ENCODE measurements at regions of chr13 and their contacts with region 1.

Region 1: DNA sequence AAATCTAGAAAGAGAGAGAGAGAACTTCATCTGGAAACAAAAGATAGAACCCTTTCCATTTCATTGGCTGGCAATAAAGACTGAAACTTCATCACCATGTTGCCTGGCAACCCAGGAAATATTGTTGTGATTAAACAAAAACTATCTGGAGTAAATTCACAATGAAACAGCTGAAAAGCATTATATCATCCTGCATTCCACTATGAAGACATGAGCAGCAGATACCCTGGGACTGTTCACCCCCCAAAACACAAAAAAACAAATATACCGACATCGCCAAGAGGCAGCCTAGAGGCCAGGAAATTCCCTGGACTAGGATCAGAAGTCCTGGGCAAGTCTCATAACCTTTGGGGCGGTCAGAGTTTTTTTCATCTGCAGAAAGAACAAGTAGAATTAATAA is 158.3 kb downstream of the FOXO1 start:
- DNase-seq: peak in 6 of 9 donors; percentile 36 to 63 (median 50)
- ATAC-seq: peak; percentile 73
- H3K4me3 ChIP-seq: no peak overlapping the region
- H3K4me3 Mint-ChIP-seq: peak overlapping the region in 9 of 10 donors; percentile 37 to 84 (median 65)
- H3K27ac ChIP-seq: peak overlapping the region; percentile 51
- H3K27ac Mint-ChIP-seq: peak overlapping the region; percentile 62 to 95 (median 85)
- H3K4me1 ChIP-seq: peaks cover 0 to 43% of the 10 kb centered on the region in 2 donors
- H3K4me1 Mint-ChIP-seq: peaks cover 27 to 79% (median 71%) of the 10 kb centered on the region in 7 donors
- H3K27me3 ChIP-seq: no peaks in the 10 kb centered on the region
- H3K27me3 Mint-ChIP-seq: no peaks in the 10 kb centered on the region

Region 2: DNA sequence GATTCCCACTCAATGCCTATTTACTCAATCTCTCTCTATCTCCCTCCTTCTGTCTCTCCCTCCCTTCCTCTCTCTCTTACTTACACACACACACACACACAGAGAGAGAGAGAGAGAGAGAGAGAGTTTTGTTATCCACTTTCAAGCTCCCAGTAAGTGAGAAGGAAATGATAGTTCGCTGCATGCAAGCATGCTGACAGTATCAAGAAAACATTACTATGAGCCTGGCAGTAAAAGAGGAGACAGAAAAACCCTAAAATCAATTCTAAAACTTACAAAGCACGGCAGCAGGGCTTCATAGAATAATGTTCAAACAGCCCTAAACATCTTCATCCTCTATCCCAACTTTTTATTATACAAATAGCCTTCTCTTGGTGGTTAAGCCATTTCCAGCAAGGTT is 13.6 kb before region 1 on chr13:
- CTCF ChIA-PET with region 1: no interaction called
- POLR2A ChIA-PET with region 1: interaction called, 8 read pairs
- intact Hi-C with region 1: loop called in 1 of 2 experiments (anchors 1 kb)
- DNase-seq: peak in 7 of 9 donors; percentile 18 to 64 (median 59)
- ATAC-seq: peak; percentile 66
- H3K4me3 ChIP-seq: peak overlapping the region; percentile 49
- H3K4me3 Mint-ChIP-seq: peak overlapping the region; percentile 76 to 97 (median 85)
- H3K27ac ChIP-seq: peak overlapping the region; percentile 70
- H3K27ac Mint-ChIP-seq: peak overlapping the region; percentile 88 to 98 (median 96)
- H3K4me1 ChIP-seq: peaks cover 38 to 66% of the 10 kb centered on the region in 2 donors
- H3K4me1 Mint-ChIP-seq: peaks cover 54 to 92% (median 85%) of the 10 kb centered on the region in 7 donors
- H3K27me3 ChIP-seq: no peaks in the 10 kb centered on the region
- H3K27me3 Mint-ChIP-seq: no peaks in the 10 kb centered on the region

Region 3: DNA sequence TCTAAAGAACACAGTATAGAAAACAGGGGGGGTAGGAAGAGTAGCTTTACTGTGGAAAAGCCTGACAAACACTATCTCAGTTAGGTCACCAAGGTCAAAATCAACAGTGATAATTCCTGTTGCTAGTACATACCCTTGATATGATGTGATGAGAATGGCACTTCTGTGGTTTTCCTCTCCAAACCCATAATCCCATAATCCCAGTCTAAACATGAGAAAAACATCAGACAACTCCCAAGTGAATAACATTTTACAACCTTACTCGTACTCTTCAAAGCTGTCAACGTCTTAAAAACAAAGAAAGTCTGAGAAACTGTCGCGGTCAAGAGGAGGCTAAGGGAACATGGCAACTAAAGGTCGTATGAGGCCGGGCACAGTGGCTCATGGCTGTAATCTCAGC is 20.8 kb after region 1 on chr13:
- CTCF ChIA-PET with region 1: interaction called, 6 read pairs
- POLR2A ChIA-PET with region 1: no interaction called
- intact Hi-C with region 1: loop called in 1 of 2 experiments (anchors 2 kb)
- DNase-seq: no peak
- ATAC-seq: no peak
- H3K4me3 ChIP-seq: no peak overlapping the region
- H3K4me3 Mint-ChIP-seq: no peak overlapping the region
- H3K27ac ChIP-seq: no peak overlapping the region
- H3K27ac Mint-ChIP-seq: no peak overlapping the region
- H3K4me1 ChIP-seq: no peaks in the 10 kb centered on the region
- H3K4me1 Mint-ChIP-seq: peaks cover 5 to 34% (median 30%) of the 10 kb centered on the region in 7 donors
- H3K27me3 ChIP-seq: no peaks in the 10 kb centered on the region
- H3K27me3 Mint-ChIP-seq: no peaks in the 10 kb centered on the region

Region 4: DNA sequence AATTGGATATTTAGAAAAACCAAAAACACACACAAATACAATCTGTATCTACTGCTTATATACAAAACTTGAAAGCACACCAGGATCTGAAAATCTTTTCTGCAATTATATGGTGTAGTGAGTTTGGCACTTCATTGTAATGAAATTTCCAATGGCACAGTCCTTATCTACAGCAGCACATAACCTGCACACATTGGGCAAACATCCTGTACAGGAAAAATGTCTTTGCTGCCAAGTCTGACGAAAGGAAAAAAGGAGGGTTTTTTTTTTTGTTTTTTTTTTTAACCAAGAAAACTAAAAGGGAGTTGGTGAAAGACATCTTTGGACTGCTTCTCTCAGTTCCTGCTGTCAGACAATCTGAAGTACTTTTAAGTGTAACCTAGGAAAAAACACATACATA is 50.5 kb after region 1 on chr13:
- CTCF ChIA-PET with region 1: no interaction called
- POLR2A ChIA-PET with region 1: no interaction called
- intact Hi-C with region 1: no loop called
- DNase-seq: no peak
- ATAC-seq: no peak
- H3K4me3 ChIP-seq: no peak overlapping the region
- H3K4me3 Mint-ChIP-seq: peak overlapping the region in 8 of 10 donors; percentile 34 to 81 (median 66)
- H3K27ac ChIP-seq: peak overlapping the region; percentile 32
- H3K27ac Mint-ChIP-seq: peak overlapping the region in 8 of 9 donors; percentile 68 to 92 (median 82)
- H3K4me1 ChIP-seq: peaks cover 7 to 47% of the 10 kb centered on the region in 2 donors
- H3K4me1 Mint-ChIP-seq: peaks cover 42 to 99% (median 93%) of the 10 kb centered on the region in 7 donors
- H3K27me3 ChIP-seq: no peaks in the 10 kb centered on the region
- H3K27me3 Mint-ChIP-seq: no peaks in the 10 kb centered on the region

Region 5: DNA sequence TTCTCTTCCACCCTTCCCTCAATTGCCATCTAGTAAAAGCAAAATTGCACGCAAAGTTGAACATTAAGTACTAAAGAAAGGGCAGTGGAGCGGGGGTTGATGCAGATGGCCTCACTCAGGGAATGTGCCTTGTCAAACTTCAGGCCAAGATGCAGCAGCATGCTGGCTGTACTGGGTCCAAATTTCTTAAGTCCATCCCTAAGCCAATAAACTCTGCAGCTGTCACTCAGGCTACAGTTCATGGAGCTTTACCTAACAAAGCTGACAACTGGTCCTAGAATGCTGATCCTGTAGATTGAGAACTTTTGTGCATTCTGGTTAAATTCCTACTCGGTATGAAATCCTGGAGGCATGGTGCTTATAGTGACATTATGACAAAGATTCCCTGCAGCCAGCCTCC is 69.9 kb after region 1 on chr13:
- CTCF ChIA-PET with region 1: no interaction called
- POLR2A ChIA-PET with region 1: no interaction called
- intact Hi-C with region 1: loop called in 1 of 2 experiments (anchors 5 kb)
- DNase-seq: no peak
- ATAC-seq: no peak
- H3K4me3 ChIP-seq: no peak overlapping the region
- H3K4me3 Mint-ChIP-seq: peak overlapping the region in 8 of 10 donors; percentile 35 to 73 (median 64)
- H3K27ac ChIP-seq: peak overlapping the region; percentile 5
- H3K27ac Mint-ChIP-seq: peak overlapping the region in 8 of 9 donors; percentile 20 to 86 (median 71)
- H3K4me1 ChIP-seq: peaks cover 46 to 84% of the 10 kb centered on the region in 2 donors
- H3K4me1 Mint-ChIP-seq: peaks cover 71 to 100% (median 99%) of the 10 kb centered on the region in 7 donors
- H3K27me3 ChIP-seq: no peaks in the 10 kb centered on the region
- H3K27me3 Mint-ChIP-seq: no peaks in the 10 kb centered on the region

Region 6: DNA sequence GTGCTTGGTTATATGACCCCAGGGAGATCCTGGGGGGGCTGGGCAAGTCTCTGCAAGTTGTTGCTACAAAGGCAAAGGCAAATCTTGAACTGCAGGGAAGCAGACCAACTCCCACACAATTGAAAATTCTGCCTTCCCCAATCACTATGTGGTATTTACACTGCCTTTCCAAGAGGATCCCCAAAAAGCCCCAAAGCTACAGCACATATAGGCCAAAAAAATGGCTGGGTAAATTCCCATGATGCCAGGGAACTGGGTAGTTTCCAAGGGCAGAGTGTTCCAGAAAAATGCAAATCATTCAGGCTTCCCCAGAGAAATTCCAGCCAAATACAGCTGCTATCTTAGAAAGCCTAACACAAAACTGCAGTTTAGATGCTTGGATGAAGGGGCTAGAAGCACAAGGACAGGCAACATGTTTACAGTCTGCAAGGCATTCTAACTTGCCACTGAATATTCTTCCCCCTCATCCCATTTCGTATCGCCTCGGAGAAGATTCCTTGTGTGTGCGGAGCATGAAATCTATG is 152.1 kb after region 1 on chr13:
- CTCF ChIA-PET with region 1: interaction called, 11 read pairs
- POLR2A ChIA-PET with region 1: interaction called, 3 read pairs
- intact Hi-C with region 1: no loop called
- DNase-seq: no peak
- ATAC-seq: no peak
- H3K4me3 ChIP-seq: no peak overlapping the region
- H3K4me3 Mint-ChIP-seq: peak overlapping the region; percentile 40 to 98 (median 68)
- H3K27ac ChIP-seq: no peak overlapping the region
- H3K27ac Mint-ChIP-seq: peak overlapping the region in 8 of 9 donors; percentile 32 to 90 (median 72)
- H3K4me1 ChIP-seq: peaks cover 40 to 61% of the 10 kb centered on the region in 2 donors
- H3K4me1 Mint-ChIP-seq: peaks cover 61 to 81% (median 74%) of the 10 kb centered on the region in 7 donors
- H3K27me3 ChIP-seq: no peaks in the 10 kb centered on the region
- H3K27me3 Mint-ChIP-seq: no peaks in the 10 kb centered on the region

Measured in naive thymus-derived CD4-positive, alpha-beta T cell (primary cell).